Motor neuron (in vitro differentiated cells): ENCODE measurements at regions of chr17 and their contacts with region 1.

Region 1: GRCh38 chr17:81018044-81018802 is 16.7 kb upstream of the BAIAP2 start:
- ATAC-seq: peak; percentile 46 to 84 (median 74)
- H3K4me3 ChIP-seq: peak overlapping the region in 1 of 5 donors; percentile 7
- H3K27ac ChIP-seq: peak overlapping the region; percentile 10 to 50
- H3K4me1 ChIP-seq: peaks cover 10 to 11% of the 10 kb centered on the region in 2 donors

Region 2: DNA sequence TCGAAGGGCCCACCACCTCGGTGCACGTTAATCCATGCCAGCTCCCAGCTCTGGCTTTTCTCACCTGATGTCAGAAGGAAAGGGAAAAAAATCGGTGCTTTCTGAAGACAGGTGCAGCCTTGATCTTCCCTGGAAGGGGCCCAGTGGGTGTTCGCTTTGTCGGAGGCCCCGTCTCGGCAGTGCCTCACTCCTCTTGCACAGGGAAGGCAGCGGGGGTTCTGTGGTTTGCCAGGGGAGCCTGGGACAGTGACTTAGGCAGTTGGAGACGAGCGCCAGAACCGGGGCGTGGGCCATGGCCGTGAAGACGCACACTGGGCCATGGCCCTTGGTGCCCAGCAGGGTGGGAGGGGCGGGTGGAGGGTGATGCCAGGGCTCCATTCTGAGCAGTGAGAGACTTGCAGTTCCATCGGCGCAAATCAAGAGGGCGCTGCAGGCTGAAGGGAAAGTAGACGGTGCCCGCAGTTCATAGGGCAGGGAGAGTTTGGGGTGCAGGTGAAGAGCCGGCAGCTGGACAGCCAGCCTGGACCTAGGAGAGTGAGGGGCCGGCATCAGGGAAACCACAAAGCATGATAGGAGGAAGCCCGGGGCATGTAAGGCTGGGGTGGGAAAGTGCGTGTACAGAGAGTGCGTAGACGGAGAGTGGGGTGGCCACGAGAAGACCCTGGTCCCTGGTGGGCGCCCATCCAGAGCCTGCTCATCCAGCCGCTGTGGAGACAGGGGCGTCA is 127.9 kb before region 1 on chr17:
- in situ Hi-C with region 1: no loop called
- ATAC-seq: no peak
- H3K4me3 ChIP-seq: no peak overlapping the region
- H3K27ac ChIP-seq: peak overlapping the region in 1 of 2 donors; percentile 81
- H3K4me1 ChIP-seq: peaks cover 6 to 23% of the 10 kb centered on the region in 2 donors

Region 3: GRCh38 chr17:81101614-81102306 is 83.5 kb after region 1 on chr17:
- in situ Hi-C with region 1: loop called in 1 of 9 experiments (anchors 25 kb)
- ATAC-seq: peak; percentile 68 to 93 (median 69)
- H3K4me3 ChIP-seq: no peak overlapping the region
- H3K27ac ChIP-seq: no peak overlapping the region
- H3K4me1 ChIP-seq: peaks cover 26 to 43% of the 10 kb centered on the region in 2 donors

Region 4: DNA sequence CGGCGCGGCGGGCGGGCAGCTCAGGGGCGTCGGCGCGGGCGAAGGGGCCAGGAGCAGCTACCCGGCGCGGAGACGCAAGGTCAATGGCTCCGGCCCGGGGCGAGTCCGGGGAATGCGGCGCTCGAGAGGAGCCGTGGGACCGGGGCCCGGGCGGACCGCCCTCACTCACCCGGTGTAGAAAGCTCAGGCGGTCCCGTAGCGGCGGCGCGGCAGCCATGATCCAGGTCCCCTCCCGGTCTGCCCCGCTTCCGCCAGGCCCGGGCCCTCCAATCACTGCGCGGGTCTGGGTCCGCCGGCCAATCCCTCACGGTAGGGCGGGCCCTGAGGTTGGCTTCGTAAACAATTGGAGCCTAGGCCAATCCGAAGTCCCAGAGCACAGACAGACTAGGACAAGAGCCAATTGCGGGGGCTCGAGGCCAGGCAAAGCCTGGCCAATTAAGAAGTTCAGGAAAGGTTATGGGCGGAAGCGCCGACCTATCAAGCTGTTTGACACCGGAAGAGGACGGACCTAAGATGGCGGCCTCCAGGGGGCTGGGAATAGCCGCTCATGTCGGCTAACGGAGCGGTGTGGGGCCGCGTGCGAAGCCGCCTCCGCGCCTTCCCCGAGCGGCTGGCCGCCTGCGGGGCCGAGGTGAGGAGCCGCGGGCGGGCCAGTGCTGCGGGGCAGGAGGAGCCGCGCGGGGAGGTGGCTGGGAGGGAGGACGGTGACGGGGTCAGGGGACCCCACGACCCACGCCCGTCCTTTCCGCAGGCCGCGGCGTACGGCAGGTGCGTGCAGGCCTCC is 220.8 kb after region 1 on chr17 and contains the starts of genes NDUFAF8 and TEPSIN:
- in situ Hi-C with region 1: loop called in 1 of 9 experiments (anchors 25 kb)
- ATAC-seq: peak; percentile 89 to 98 (median 97)
- H3K4me3 ChIP-seq: peak within 1 kb of the TSS; percentile 62 to 97 (median 94)
- H3K27ac ChIP-seq: peak within 1 kb of the TSS; percentile 81 to 90
- H3K4me1 ChIP-seq: peaks cover 3 to 11% of the 10 kb centered on the region in 2 donors
- total RNA-seq, gene NDUFAF8: 23.9 to 200 (median 94.8) TPM
- total RNA-seq, gene TEPSIN: 5.9 to 36.0 (median 10.6) TPM